Endothelial cell of umbilical vein (primary cell): ENCODE measurements at regions of chr13 and their contacts with region 1.

Region 1: DNA sequence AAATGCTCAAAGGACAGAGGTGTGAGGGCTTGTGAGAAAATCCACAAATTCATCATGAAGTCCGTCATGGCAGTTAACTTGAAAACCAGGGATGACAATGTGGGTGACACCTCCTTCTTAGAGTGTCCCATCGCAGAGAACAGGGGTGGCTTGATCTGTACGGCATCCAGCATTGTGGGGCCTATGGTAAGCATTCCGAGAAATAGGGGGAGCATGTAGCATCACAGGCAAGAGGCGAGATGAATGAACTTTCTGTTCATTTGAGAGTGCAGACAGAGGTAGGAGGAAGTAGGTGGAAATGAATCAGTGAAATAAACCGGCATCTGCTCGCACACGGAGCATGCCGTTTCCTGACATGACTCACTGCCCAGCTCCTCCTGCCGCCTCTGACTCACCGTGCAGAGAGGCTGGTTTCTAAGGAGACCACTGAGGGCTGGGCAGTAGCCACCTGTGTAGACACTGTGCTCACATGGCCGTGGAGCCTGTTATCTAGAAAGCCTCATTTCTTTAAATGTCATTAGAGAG is 339.0 kb downstream of the RFC3 start:
- DNase-seq: peak; percentile 99
- H3K4me3 ChIP-seq: peak overlapping the region in 1 of 3 experiments; percentile 44
- H3K27ac ChIP-seq: peak overlapping the region; percentile 95
- H3K4me1 ChIP-seq: peaks cover 68% of the 10 kb centered on the region
- H3K27me3 ChIP-seq: no peaks in the 10 kb centered on the region
- CTCF ChIP-seq: no peak
- POLR2A ChIP-seq: peak; percentile 58

Region 2: GRCh38 chr13:33285420-33286124 is 871.3 kb before region 1 on chr13 and contains the start of gene STARD13:
- CTCF ChIA-PET with region 1: no interaction called
- POLR2A ChIA-PET with region 1: no interaction called
- dilution Hi-C with region 1: no loop called
- intact Hi-C with region 1: loop called (anchors 10 kb)
- DNase-seq: peak; percentile 98
- H3K4me3 ChIP-seq: peak within 1 kb of the TSS; percentile 79 to 98 (median 88)
- H3K27ac ChIP-seq: peak within 1 kb of the TSS; percentile 99
- H3K4me1 ChIP-seq: peaks cover 30% of the 10 kb centered on the region
- H3K27me3 ChIP-seq: no peaks in the 10 kb centered on the region
- CTCF ChIP-seq: peak; percentile 29 to 49
- POLR2A ChIP-seq: peak; percentile 85
- total RNA-seq, gene STARD13: 41.1 and 47.7 TPM in 2 replicates

Region 3: GRCh38 chr13:33817901-33818706 is 338.8 kb before region 1 on chr13 and contains the start of gene RFC3:
- CTCF ChIA-PET with region 1: no interaction called
- POLR2A ChIA-PET with region 1: no interaction called
- dilution Hi-C with region 1: no loop called
- intact Hi-C with region 1: loop called (anchors 5 kb)
- DNase-seq: peak; percentile 94
- H3K4me3 ChIP-seq: peak within 1 kb of the TSS; percentile 65 to 99 (median 99)
- H3K27ac ChIP-seq: peak within 1 kb of the TSS; percentile 85
- H3K4me1 ChIP-seq: peaks cover 9% of the 10 kb centered on the region
- H3K27me3 ChIP-seq: no peaks in the 10 kb centered on the region
- CTCF ChIP-seq: no peak
- POLR2A ChIP-seq: peak; percentile 48
- total RNA-seq, gene RFC3: 17.9 and 19.5 TPM in 2 replicates

Region 4: GRCh38 chr13:34025746-34026145 is 131.2 kb before region 1 on chr13:
- CTCF ChIA-PET with region 1: no interaction called
- POLR2A ChIA-PET with region 1: no interaction called
- dilution Hi-C with region 1: no loop called
- intact Hi-C with region 1: loop called (anchors 5 kb)
- DNase-seq: peak; percentile 57
- H3K4me3 ChIP-seq: no peak overlapping the region
- H3K27ac ChIP-seq: peak overlapping the region; percentile 71
- H3K4me1 ChIP-seq: peaks cover 13% of the 10 kb centered on the region
- H3K27me3 ChIP-seq: no peaks in the 10 kb centered on the region
- CTCF ChIP-seq: no peak
- POLR2A ChIP-seq: no peak

Region 5: GRCh38 chr13:34265016-34265692 is 108.3 kb after region 1 on chr13:
- CTCF ChIA-PET with region 1: no interaction called
- POLR2A ChIA-PET with region 1: no interaction called
- dilution Hi-C with region 1: no loop called
- intact Hi-C with region 1: loop called (anchors 5 kb)
- DNase-seq: peak; percentile 37
- H3K4me3 ChIP-seq: no peak overlapping the region
- H3K27ac ChIP-seq: peak overlapping the region; percentile 18
- H3K4me1 ChIP-seq: peaks cover 10% of the 10 kb centered on the region
- H3K27me3 ChIP-seq: no peaks in the 10 kb centered on the region
- CTCF ChIP-seq: no peak
- POLR2A ChIP-seq: no peak

Region 6: DNA sequence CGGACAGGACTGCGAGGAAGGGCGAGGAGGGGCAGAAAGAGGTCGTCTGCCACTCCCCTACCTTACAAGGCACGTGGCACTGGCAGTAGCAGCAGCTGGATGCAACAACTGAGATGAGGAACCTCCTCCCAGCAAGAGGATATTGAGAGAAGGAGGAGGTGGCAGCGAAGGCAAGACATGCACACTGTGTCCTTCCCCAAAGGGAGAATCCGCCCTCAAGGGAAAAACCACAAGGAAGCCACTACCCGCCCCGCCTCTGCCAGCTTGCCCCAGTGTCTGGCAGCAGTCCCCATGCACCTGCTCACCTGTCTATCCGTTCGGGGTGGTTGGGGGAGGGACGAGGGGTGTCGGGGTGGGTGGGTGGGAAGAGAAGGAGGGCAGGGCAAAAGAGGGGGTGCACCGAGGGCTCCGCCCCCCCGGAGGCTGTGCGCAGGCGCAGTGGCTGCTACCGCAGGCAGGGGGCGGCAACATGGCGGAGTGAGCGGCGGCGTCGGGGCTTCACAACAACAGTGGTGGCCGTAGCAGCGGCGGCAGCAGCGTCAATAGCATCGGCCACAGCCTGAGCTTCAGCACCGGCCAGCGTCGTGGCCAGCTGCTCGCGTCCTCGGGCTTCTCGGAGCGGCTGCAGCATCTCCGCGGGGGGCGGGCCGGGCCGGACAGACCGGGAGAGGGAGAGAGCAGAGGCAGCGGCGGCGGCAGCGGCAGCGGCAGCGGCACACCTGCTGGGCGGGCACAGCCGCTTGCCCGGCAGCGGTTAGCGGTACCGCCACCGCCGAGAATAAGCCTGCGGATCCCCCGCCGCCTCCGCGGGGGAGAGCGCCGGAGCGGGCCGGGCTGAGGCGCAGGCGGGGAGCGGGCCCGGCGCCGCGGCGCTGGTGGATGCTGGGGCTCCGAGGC is 785.2 kb after region 1 on chr13 and contains the start of gene NBEA:
- CTCF ChIA-PET with region 1: no interaction called
- POLR2A ChIA-PET with region 1: no interaction called
- dilution Hi-C with region 1: no loop called
- intact Hi-C with region 1: loop called (anchors 10 kb)
- DNase-seq: peak; percentile 80
- H3K4me3 ChIP-seq: peak within 1 kb of the TSS; percentile 60 to 83 (median 70)
- H3K27ac ChIP-seq: no peak within 1 kb of the TSS
- H3K4me1 ChIP-seq: peaks cover 13% of the 10 kb centered on the region
- H3K27me3 ChIP-seq: peaks cover 0 to 12% of the 10 kb centered on the region in 2 experiments
- CTCF ChIP-seq: no peak
- POLR2A ChIP-seq: peak; percentile 29
- total RNA-seq, gene NBEA: 4.4 and 4.8 TPM in 2 replicates